Ovary (tissue), 10 donors: ENCODE measurements at regions of chr10 and their contacts with region 1.

Region 1: GRCh38 chr10:31031558-31032257 is at the start of gene ZNF438:
- DNase-seq: peak; percentile 94 to 99 (median 97)
- H3K4me3 ChIP-seq: peak within 1 kb of the TSS; percentile 83
- H3K27ac ChIP-seq: peak within 1 kb of the TSS; percentile 93 to 100
- H3K4me1 ChIP-seq: peaks cover 6% of the 10 kb centered on the region
- H3K27me3 ChIP-seq: no peaks in the 10 kb centered on the region
- CTCF ChIP-seq: peak in 2 of 3 donors; percentile 62 to 64
- EP300 ChIP-seq: peak; percentile 43
- POLR2A ChIP-seq: peak; percentile 84
- total RNA-seq, gene ZNF438: 6.2 to 11.6 (median 6.9) TPM

Region 2: DNA sequence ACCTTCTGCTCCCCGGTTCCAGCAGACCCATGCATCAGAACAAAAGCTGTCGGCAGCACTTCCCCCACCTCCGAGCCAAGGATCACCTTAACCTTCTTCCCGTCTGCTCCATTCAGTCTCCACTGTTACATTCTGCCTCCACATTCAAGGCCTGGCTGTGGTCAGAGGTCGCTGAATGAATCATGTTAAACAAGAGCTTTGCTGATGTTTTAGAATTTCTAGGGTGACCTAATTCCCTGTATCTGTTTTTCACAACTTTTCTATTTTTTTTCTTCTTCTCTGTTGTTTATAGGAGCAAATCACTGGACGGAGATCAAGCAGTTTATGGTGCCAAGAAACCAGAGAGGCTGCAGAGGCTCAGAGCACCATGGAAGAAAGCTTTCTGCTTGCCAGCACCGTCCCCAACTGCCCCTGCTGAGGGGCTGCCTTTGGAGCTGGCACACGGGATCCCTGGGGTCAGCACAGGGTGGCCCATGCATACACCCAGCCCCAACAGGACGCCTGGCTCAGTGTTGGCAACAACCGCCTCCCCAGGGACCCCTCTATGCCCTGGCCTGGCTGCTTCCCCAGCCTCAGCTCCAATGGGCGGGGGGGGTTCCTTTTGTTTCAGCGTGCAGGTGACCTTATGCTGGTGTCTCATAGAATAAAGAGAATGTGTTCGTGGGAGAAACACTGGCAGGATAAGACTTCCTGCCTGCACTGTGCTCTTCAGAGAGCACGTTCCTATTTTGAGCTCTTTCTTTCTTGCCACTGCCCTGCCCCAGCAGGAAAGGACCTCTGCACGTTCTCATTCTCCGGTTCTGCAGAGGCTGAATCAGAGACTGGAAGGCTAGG is 219.5 kb before region 1 on chr10:
- intact Hi-C with region 1: loop called in 1 of 4 experiments (anchors 10 kb)
- DNase-seq: peak; percentile 77 to 82 (median 80)
- H3K4me3 ChIP-seq: no peak overlapping the region
- H3K27ac ChIP-seq: peak overlapping the region; percentile 49 to 76
- H3K4me1 ChIP-seq: peaks cover 17% of the 10 kb centered on the region
- H3K27me3 ChIP-seq: no peaks in the 10 kb centered on the region
- CTCF ChIP-seq: no peak
- EP300 ChIP-seq: no peak
- POLR2A ChIP-seq: no peak

Region 3: GRCh38 chr10:31133628-31134302 is 102.1 kb after region 1 on chr10:
- intact Hi-C with region 1: loop called in 1 of 4 experiments (anchors 10 kb)
- DNase-seq: peak; percentile 85 to 92 (median 89)
- H3K4me3 ChIP-seq: peak overlapping the region; percentile 45
- H3K27ac ChIP-seq: peak overlapping the region; percentile 73 to 81
- H3K4me1 ChIP-seq: peaks cover 5% of the 10 kb centered on the region
- H3K27me3 ChIP-seq: no peaks in the 10 kb centered on the region
- CTCF ChIP-seq: no peak
- EP300 ChIP-seq: no peak
- POLR2A ChIP-seq: peak; percentile 55

Region 4: GRCh38 chr10:31274310-31274709 is 242.6 kb after region 1 on chr10:
- intact Hi-C with region 1: no loop called
- DNase-seq: no peak
- H3K4me3 ChIP-seq: no peak overlapping the region
- H3K27ac ChIP-seq: no peak overlapping the region
- H3K4me1 ChIP-seq: peaks cover 4% of the 10 kb centered on the region
- H3K27me3 ChIP-seq: no peaks in the 10 kb centered on the region
- CTCF ChIP-seq: no peak
- EP300 ChIP-seq: no peak
- POLR2A ChIP-seq: no peak

Region 5: DNA sequence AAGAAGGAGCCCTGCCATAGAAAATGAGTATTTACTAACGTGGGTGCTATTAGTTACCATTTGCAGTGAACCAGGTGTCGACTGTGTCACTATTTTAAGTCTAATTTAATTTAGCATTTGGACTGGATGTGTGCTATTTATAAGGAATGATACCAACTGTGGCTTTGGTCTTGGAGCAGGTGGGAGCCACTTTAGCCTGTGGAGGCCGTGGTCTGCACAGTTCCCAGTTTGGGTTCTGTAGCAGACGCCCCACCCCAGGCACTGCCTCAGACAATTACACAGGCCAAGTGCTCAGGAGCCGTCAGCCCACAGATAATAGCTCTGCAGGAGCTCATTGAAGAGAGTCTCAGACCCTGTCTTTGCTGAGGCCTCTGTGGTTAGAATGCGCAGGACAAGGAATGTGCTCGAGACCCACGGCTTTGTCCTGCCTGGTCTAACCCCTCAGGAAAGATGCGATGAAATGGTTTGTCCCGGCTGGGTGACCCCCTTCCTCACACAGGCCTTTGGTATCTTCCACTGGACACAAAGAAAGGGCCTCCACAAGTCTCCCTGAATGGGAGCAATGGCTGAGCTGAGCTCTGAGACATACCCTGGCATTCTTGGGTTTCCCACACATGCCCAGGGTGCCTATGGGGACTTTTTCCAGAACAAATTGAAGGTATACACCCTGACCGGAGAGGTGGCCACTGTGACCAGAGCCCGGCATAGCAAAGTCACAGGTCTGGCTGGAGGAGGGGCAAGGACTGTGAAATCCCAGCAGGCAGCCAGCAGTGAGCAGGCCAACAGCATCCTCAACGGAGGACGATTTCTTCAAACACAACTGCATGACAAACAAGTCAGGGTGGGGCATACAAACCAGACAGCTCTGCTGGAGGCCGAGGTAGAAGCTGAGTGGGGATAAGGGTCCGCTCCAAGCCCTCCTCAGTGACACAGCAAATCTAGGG is 645.8 kb after region 1 on chr10:
- intact Hi-C with region 1: no loop called
- DNase-seq: no peak
- H3K4me3 ChIP-seq: no peak overlapping the region
- H3K27ac ChIP-seq: no peak overlapping the region
- H3K4me1 ChIP-seq: no peaks in the 10 kb centered on the region
- H3K27me3 ChIP-seq: no peaks in the 10 kb centered on the region
- CTCF ChIP-seq: no peak
- EP300 ChIP-seq: no peak
- POLR2A ChIP-seq: no peak